ENCODE measurements at regions of chr5 and their contacts with region 1.

Region 1: GRCh38 chr5:152142840-152143469 is 218.3 kb upstream of the GLRA1 start:
- DNase-seq: peak; percentile 59
- ATAC-seq: peak; percentile 78 to 80

Region 2: GRCh38 chr5:152218694-152219093 is 75.7 kb after region 1 on chr5:
- intact Hi-C with region 1: no loop called
- DNase-seq: no peak
- ATAC-seq: no peak

Region 3: GRCh38 chr5:152271420-152271819 is 128.5 kb after region 1 on chr5:
- intact Hi-C with region 1: loop called in 1 of 2 experiments (anchors 5 kb)
- DNase-seq: no peak
- ATAC-seq: peak; percentile 63 to 76

Region 4: GRCh38 chr5:152427721-152428120 is 284.8 kb after region 1 on chr5:
- intact Hi-C with region 1: no loop called
- DNase-seq: no peak
- ATAC-seq: no peak

Region 5: GRCh38 chr5:152505442-152506042 is 362.6 kb after region 1 on chr5:
- intact Hi-C with region 1: loop called in 1 of 2 experiments (anchors 10 kb)
- DNase-seq: peak; percentile 51
- ATAC-seq: peak; percentile 70 to 73